ENCODE measurements at regions of chr1 and their contacts with region 1.

Region 1: GRCh38 chr1:94142022-94142421 is 21.1 kb upstream of the ABCA4 start:
- DNase-seq: peak; percentile 63
- ATAC-seq: no peak; the same call in 1 of the 2 replicates
- H3K4me3 ChIP-seq: no peak overlapping the region
- H3K27ac ChIP-seq: no peak overlapping the region
- H3K4me1 ChIP-seq: peaks cover 4% of the 10 kb centered on the region; the same call in 1 of the 2 replicates
- H3K27me3 ChIP-seq: no peaks in the 10 kb centered on the region; the same call in 1 of the 2 replicates
- CTCF ChIP-seq: no peak
- POLR2A ChIP-seq: no peak
- RAD21 ChIP-seq: no peak

Region 2: GRCh38 chr1:94105957-94106529 is 36.0 kb before region 1 on chr1:
- CTCF ChIA-PET with region 1: interaction called, 4 read pairs
- POLR2A ChIA-PET with region 1: no interaction called
- dilution Hi-C with region 1: no loop called
- in situ Hi-C with region 1: no loop called
- intact Hi-C with region 1: loop called (anchors 5 kb)
- DNase-seq: peak; percentile 46
- ATAC-seq: peak; percentile 29; the same call in 1 of the 2 replicates
- H3K4me3 ChIP-seq: no peak overlapping the region
- H3K27ac ChIP-seq: no peak overlapping the region
- H3K4me1 ChIP-seq: no peaks in the 10 kb centered on the region; the same call in 1 of the 2 replicates
- H3K27me3 ChIP-seq: peaks cover 17% of the 10 kb centered on the region
- CTCF ChIP-seq: no peak
- POLR2A ChIP-seq: no peak
- RAD21 ChIP-seq: no peak

Region 3: GRCh38 chr1:94316836-94317789 is 175.1 kb after region 1 on chr1:
- CTCF ChIA-PET with region 1: no interaction called
- POLR2A ChIA-PET with region 1: no interaction called
- dilution Hi-C with region 1: no loop called
- in situ Hi-C with region 1: no loop called
- intact Hi-C with region 1: no loop called
- DNase-seq: peak; percentile 52
- ATAC-seq: peak; percentile 67
- H3K4me3 ChIP-seq: no peak overlapping the region
- H3K27ac ChIP-seq: no peak overlapping the region
- H3K4me1 ChIP-seq: peaks cover 4% of the 10 kb centered on the region
- H3K27me3 ChIP-seq: no peaks in the 10 kb centered on the region
- CTCF ChIP-seq: no peak
- POLR2A ChIP-seq: no peak
- RAD21 ChIP-seq: no peak

Region 4: DNA sequence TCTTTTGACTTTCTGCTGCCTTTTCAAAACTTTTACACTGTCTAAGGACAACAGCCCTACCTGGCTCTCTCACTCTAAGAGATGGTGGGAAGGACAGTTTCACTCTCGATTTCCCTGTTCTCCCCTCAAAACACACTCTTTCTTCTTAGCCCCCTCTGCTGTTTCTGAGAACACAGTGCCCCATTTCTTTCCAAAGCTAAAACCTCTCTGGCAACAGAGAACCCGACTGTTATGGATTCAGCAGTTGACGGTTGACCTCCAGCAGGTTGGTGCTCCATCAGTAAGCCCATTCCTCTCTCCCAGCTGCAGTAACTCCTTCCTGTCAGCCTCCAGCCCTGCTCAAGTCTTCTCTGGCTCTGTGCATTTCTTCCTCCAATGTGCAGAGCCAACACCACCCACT is 188.0 kb after region 1 on chr1:
- CTCF ChIA-PET with region 1: no interaction called
- POLR2A ChIA-PET with region 1: no interaction called
- dilution Hi-C with region 1: no loop called
- in situ Hi-C with region 1: no loop called
- intact Hi-C with region 1: no loop called
- DNase-seq: peak; percentile 54
- ATAC-seq: peak; percentile 3; the same call in 1 of the 2 replicates
- H3K4me3 ChIP-seq: no peak overlapping the region
- H3K27ac ChIP-seq: no peak overlapping the region
- H3K4me1 ChIP-seq: peaks cover 29% of the 10 kb centered on the region
- H3K27me3 ChIP-seq: no peaks in the 10 kb centered on the region
- CTCF ChIP-seq: peak; percentile 55
- POLR2A ChIP-seq: no peak
- RAD21 ChIP-seq: peak; percentile 66

Measured in IMR-90 (cell line).